ENCODE measurements at regions of chr1 and their contacts with region 1.

Region 1: GRCh38 chr1:167635156-167635648 is 5.2 kb downstream of the RCSD1 start:
- DNase-seq: peak in 1 of 9 experiments; percentile 46
- ATAC-seq: no peak
- H3K4me3 ChIP-seq: no peak overlapping the region
- H3K4me3 Mint-ChIP-seq: peak overlapping the region; percentile 8
- H3K27ac ChIP-seq: peak overlapping the region in 1 of 2 experiments; percentile 5
- H3K27ac Mint-ChIP-seq: peak overlapping the region; percentile 97
- H3K4me1 ChIP-seq: peaks cover 76% of the 10 kb centered on the region
- H3K4me1 Mint-ChIP-seq: peaks cover 88% of the 10 kb centered on the region
- H3K27me3 ChIP-seq: no peaks in the 10 kb centered on the region
- H3K27me3 Mint-ChIP-seq: no peaks in the 10 kb centered on the region
- CTCF ChIP-seq: no peak

Region 2: DNA sequence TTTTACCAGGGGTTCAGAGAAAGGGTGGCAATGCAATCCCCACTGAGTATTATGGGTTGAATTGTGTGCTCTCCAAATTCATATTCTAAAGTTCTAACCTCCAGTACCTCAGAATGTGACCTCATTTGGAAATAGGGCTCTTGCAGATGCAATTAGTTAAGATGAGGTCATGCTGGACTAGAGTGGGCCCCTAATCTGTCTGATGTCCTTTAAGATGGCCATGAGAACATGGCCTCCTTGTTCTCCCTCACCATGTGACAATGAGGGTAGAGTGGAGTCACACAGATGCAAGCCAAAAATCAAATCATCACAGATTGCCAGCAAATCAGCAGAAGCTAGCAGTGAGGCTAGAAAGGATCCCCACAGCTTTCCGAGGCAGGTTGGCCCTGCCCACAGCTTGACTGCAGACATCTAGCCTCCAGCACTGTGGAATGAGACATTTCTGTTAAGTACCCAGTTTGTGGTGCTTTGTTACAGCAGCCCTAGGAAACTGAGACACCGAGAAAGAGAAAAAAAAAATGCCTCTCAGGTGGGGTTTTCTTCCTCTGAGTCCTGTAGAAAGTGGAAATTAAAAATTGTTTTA is 56.2 kb before region 1 on chr1:
- CTCF ChIA-PET with region 1: no interaction called
- POLR2A ChIA-PET with region 1: no interaction called
- intact Hi-C with region 1: no loop called
- DNase-seq: no peak
- ATAC-seq: no peak
- H3K4me3 ChIP-seq: no peak overlapping the region
- H3K4me3 Mint-ChIP-seq: no peak overlapping the region
- H3K27ac ChIP-seq: no peak overlapping the region
- H3K27ac Mint-ChIP-seq: no peak overlapping the region
- H3K4me1 ChIP-seq: no peaks in the 10 kb centered on the region
- H3K4me1 Mint-ChIP-seq: no peaks in the 10 kb centered on the region
- H3K27me3 ChIP-seq: no peaks in the 10 kb centered on the region
- H3K27me3 Mint-ChIP-seq: no peaks in the 10 kb centered on the region
- CTCF ChIP-seq: no peak

Region 3: GRCh38 chr1:167594822-167595221 is 40.4 kb before region 1 on chr1:
- CTCF ChIA-PET with region 1: interaction called, 154 read pairs
- POLR2A ChIA-PET with region 1: interaction called, 68 read pairs
- intact Hi-C with region 1: loop called (anchors 1 kb)
- DNase-seq: no peak
- ATAC-seq: no peak
- H3K4me3 ChIP-seq: no peak overlapping the region
- H3K4me3 Mint-ChIP-seq: no peak overlapping the region
- H3K27ac ChIP-seq: no peak overlapping the region
- H3K27ac Mint-ChIP-seq: no peak overlapping the region
- H3K4me1 ChIP-seq: peaks cover 1% of the 10 kb centered on the region
- H3K4me1 Mint-ChIP-seq: peaks cover 4% of the 10 kb centered on the region
- H3K27me3 ChIP-seq: no peaks in the 10 kb centered on the region
- H3K27me3 Mint-ChIP-seq: no peaks in the 10 kb centered on the region
- CTCF ChIP-seq: no peak

Region 4: DNA sequence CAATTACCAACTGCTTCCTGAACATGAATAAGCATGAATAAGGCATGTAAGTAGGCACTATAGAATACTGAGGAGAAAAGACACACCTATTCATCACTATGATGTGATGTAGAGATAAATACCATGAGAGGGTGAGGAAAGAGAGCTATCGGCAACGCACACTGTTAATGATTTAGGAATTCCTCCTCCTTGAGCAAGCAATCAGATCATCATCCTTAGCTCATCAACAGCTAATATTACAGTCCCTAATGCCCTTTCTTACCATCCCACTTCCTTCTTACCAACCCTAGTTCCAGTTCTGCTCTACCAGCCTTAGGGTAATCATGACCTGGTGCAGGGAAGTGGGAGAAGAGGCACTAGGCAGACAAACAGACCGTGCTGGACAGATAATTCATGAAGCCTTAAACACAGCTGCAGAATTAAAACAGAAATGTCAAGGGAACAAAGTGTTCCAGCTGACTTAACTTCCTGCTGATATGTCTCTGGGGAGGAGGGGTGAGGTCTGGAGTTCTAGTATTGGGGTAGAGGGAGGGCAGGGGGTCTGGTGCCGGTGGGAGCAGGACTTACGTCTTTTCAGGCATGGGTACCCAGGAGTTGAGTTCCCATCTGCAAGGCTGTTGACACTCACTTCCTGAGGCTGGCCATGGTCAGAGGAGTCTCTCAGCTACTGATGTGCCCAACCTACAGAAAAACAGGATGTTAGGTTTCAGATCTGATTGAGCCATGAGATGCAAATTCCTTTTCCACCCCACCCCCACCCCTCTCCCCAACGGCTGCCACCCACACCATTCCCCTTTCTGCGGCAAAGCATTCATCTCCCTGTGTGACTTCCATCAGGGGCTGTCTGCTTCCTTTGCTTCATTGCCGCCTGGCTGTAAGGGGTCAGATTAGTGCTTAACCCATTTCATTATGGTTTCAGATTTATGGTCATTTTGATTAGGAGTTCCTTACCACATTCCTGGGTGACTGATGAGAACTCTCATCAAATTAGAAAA is 17.8 kb before region 1 on chr1:
- CTCF ChIA-PET with region 1: interaction called, 19 read pairs
- POLR2A ChIA-PET with region 1: interaction called, 86 read pairs
- intact Hi-C with region 1: loop called in 1 of 2 experiments (anchors 2 kb)
- DNase-seq: peak in 4 of 9 experiments; percentile 31 to 68 (median 46)
- ATAC-seq: peak; percentile 49
- H3K4me3 ChIP-seq: peak overlapping the region in 1 of 2 experiments; percentile 6
- H3K4me3 Mint-ChIP-seq: peak overlapping the region; percentile 60
- H3K27ac ChIP-seq: peak overlapping the region; percentile 9 to 59
- H3K27ac Mint-ChIP-seq: peak overlapping the region; percentile 92
- H3K4me1 ChIP-seq: peaks cover 39% of the 10 kb centered on the region
- H3K4me1 Mint-ChIP-seq: peaks cover 59% of the 10 kb centered on the region
- H3K27me3 ChIP-seq: no peaks in the 10 kb centered on the region
- H3K27me3 Mint-ChIP-seq: no peaks in the 10 kb centered on the region
- CTCF ChIP-seq: no peak

Measured in CD8-positive, alpha-beta T cell (primary cell).